ENCODE measurements at regions of chr7 and their contacts with region 1.

Region 1: GRCh38 chr7:106009403-106010226 is 46.6 kb downstream of the CDHR3 start:
- DNase-seq: peak; percentile 89

Region 2: DNA sequence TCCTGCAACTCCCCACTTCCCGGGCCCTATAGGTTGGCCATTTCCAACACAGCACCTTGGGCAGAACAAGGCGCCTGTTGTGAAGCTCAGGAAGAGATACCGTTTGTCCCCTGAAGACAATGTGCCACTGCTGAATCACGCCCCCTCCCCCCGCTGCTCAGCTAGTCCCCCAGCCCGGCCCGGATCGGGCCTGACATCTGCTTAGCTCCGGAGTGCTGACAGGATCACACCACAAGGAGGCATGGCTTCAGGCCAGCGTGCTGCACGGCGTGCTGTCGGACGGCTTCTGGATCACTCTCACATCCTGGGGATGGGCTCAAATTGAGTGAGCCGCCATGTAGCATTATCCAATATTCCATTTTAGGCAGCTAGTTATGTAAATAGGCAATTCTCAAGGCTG is 366.2 kb before region 1 on chr7:
- intact Hi-C with region 1: no loop called
- DNase-seq: no peak

Region 3: DNA sequence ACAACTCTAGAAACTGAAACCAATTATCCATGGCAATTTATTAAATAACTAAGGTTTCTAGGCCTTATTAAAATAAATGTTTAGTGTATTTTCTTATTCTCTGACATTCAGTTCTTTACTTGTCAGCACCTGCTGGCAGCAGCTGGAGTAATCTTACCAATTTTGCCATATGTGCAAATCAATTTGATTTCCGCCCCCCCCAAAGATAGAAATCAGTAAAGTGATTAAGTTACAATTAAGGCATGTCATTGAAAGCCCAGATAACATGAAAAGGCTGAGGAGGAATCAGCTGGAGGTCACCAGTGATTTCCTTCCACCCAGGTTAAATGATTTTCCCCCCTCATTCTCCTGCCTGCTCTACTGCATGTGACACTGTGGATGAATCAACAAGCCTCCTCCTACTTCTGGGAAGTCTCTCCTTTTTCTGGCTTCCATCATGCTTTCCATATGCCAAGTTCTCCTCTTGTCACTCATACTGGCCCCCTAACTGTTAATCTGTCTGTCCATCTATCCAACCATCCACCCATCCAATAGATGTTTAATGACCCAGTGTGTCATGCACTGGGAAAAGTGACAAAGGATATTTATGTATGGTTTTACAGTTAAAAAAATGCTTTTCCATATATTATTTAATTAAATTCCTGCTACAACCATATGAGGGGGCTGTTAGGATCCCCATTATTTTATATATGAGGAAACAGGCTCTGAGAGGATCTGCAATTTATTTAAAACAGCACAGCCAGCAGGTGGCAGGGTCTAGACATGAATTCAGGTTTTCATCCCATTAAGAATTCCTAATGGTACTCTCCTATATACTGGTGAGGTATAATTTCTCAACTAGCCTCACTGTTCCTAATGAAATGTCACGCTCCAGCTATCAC is 249.7 kb before region 1 on chr7:
- intact Hi-C with region 1: loop called (anchors 2 kb)
- DNase-seq: no peak

Region 4: GRCh38 chr7:106071356-106071998 is 61.9 kb after region 1 on chr7:
- intact Hi-C with region 1: no loop called
- DNase-seq: no peak

Measured in cardiac septum (tissue), 1 donor.